ENCODE measurements at regions of chr10 and their contacts with region 1.

Region 1: DNA sequence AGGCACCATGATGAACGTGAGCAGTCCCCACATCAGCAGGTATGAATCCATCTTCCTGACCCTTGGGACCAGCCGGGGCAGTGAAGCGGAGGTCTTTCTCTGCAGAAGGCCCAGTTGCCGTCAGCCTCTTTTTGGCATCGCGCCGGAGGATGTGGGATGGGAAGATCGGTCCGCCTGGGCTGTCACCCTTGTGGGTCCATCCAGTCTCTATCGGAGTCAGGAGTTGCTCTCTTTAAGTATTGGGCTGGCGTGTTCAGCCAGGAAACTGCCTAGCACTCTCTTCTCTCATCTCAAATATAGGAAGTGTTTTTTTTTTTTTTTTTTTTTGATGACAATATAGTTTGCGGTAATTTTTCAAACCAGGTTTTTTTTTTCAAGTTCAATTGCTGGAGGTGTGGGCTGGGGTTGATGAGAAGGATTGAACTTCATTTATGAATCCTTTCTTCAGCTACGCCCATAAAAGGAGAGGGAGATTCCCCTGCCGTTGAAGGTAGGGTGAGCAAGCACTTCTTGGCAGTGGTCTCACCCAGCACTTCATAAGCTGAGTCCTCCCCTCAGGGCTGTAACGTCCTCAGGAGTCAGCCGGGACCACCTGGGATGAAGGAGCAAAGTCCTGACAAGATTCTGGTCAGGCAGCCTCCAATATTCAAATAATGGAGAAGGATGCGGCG is at the start of gene IL2RA:
- DNase-seq: peak; percentile 90
- H3K4me3 Mint-ChIP-seq: peak within 1 kb of the TSS; percentile 91
- H3K27ac Mint-ChIP-seq: peak within 1 kb of the TSS; percentile 96
- H3K4me1 Mint-ChIP-seq: peaks cover 56% of the 10 kb centered on the region
- H3K27me3 Mint-ChIP-seq: peaks cover 2% of the 10 kb centered on the region
- total RNA-seq, gene IL2RA: 965 and 989 TPM in 2 replicates

Region 2: GRCh38 chr10:6045314-6045848 is 16.9 kb before region 1 on chr10:
- intact Hi-C with region 1: loop called (anchors 1 kb)
- DNase-seq: peak; percentile 82
- H3K4me3 Mint-ChIP-seq: peak overlapping the region; percentile 80
- H3K27ac Mint-ChIP-seq: peak overlapping the region; percentile 95
- H3K4me1 Mint-ChIP-seq: peaks cover 76% of the 10 kb centered on the region
- H3K27me3 Mint-ChIP-seq: no peaks in the 10 kb centered on the region

Region 3: DNA sequence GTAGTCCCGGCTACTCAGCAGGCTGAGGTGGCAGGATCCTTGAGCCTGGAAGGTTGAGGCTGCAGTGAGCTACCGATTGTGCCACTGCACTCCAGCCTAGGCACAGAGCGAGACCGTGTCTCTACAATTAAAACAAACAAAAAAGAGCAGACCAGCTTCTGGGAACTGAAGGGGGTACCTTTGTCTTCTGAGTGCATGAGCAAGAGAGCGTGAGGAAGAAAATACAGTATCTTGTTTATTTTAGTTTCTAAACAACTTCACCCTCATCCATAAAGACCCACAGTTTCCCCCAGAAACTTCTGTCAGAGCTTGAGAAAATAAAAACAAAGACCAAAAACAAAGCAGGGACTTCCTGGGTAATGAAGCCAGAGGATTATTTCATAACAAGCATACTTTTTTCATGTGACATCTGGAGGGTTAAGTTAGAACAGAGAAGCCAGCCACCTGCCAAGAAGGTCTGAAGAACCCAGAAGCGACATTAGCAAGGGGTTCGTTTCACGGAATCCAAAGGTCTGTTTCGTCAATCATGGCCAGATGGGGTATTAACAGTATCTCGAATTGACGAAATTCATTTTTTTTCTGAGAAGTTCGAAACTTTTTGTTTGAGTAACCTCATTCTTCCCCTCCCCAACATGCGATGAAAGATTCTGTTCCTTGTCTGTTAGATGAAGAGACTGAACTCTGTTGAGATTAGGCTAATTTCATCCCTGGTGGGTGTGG is 10.1 kb after region 1 on chr10:
- intact Hi-C with region 1: loop called (anchors 1 kb)
- DNase-seq: peak; percentile 81
- H3K4me3 Mint-ChIP-seq: peak overlapping the region; percentile 70
- H3K27ac Mint-ChIP-seq: peak overlapping the region; percentile 98
- H3K4me1 Mint-ChIP-seq: peaks cover 81% of the 10 kb centered on the region
- H3K27me3 Mint-ChIP-seq: no peaks in the 10 kb centered on the region

Region 4: GRCh38 chr10:6083523-6084475 is 21.6 kb after region 1 on chr10:
- intact Hi-C with region 1: loop called (anchors 1 kb)
- DNase-seq: peak; percentile 90
- H3K4me3 Mint-ChIP-seq: peak overlapping the region; percentile 87
- H3K27ac Mint-ChIP-seq: peak overlapping the region; percentile 97
- H3K4me1 Mint-ChIP-seq: peaks cover 62% of the 10 kb centered on the region
- H3K27me3 Mint-ChIP-seq: peaks cover 2% of the 10 kb centered on the region

Region 5: GRCh38 chr10:6144406-6145165 is 82.3 kb after region 1 on chr10:
- intact Hi-C with region 1: loop called (anchors 2 kb)
- DNase-seq: peak; percentile 98
- H3K4me3 Mint-ChIP-seq: peak overlapping the region; percentile 89
- H3K27ac Mint-ChIP-seq: peak overlapping the region; percentile 81
- H3K4me1 Mint-ChIP-seq: peaks cover 73% of the 10 kb centered on the region
- H3K27me3 Mint-ChIP-seq: no peaks in the 10 kb centered on the region

Region 6: DNA sequence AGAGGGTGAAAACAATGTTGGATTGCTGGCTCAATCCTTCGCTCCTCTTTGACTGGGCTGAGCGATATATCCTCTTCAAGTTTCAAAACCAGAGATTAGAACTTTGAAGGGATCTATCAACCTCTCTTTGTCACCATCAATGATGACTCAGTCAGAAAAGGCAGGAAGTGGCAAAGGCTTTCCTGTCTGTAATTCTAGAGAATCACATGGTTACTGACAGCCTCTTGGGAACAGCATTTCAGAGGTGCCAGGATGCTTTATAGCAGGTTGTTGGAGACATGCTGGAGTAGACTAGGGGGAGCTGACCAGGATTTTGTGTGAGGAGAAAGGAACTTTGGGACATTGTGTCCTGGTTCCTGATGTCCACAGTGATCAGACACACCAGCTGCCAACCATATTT is 436.5 kb after region 1 on chr10:
- intact Hi-C with region 1: loop called (anchors 5 kb)
- DNase-seq: peak; percentile 89
- H3K4me3 Mint-ChIP-seq: peak overlapping the region; percentile 78
- H3K27ac Mint-ChIP-seq: peak overlapping the region; percentile 84
- H3K4me1 Mint-ChIP-seq: peaks cover 42% of the 10 kb centered on the region
- H3K27me3 Mint-ChIP-seq: no peaks in the 10 kb centered on the region